ENCODE measurements at regions of chr19 and their contacts with region 1.

Region 1: GRCh38 chr19:11435058-11435832 is at the starts of genes ODAD3 and PRKCSH:
- DNase-seq: peak; percentile 99
- ATAC-seq: peak; percentile 98
- H3K4me3 ChIP-seq: peak within 1 kb of the TSS; percentile 99
- H3K27ac ChIP-seq: peak within 1 kb of the TSS; percentile 86
- H3K4me1 ChIP-seq: peaks cover 11% of the 10 kb centered on the region
- H3K27me3 ChIP-seq: no peaks in the 10 kb centered on the region
- CTCF ChIP-seq: peak; percentile 87 to 94 (median 93)
- EP300 ChIP-seq: peak in 1 of 2 experiments; percentile 44; a peak in 1 of 4 replicates
- POLR2A ChIP-seq: peak; percentile 86
- RAD21 ChIP-seq: no peak
- polyA plus RNA-seq, gene ODAD3: not detected
- polyA plus RNA-seq, gene PRKCSH: 1.1 to 5.2 TPM

Region 2: GRCh38 chr19:11293433-11294389 is 141.5 kb before region 1 on chr19:
- CTCF ChIA-PET with region 1: interaction called, 4 read pairs
- POLR2A ChIA-PET with region 1: no interaction called
- RAD21 ChIA-PET with region 1: interaction called, 3 read pairs
- SMC1A ChIA-PET with region 1: no interaction called
- in situ Hi-C with region 1: no loop called
- intact Hi-C with region 1: loop called (anchors 5 kb)
- DNase-seq: peak; percentile 59
- ATAC-seq: peak; percentile 99
- H3K4me3 ChIP-seq: peak overlapping the region; percentile 32; the same call in 1 of the 2 replicates
- H3K27ac ChIP-seq: no peak overlapping the region
- H3K4me1 ChIP-seq: peaks cover 7% of the 10 kb centered on the region
- H3K27me3 ChIP-seq: no peaks in the 10 kb centered on the region
- CTCF ChIP-seq: peak; percentile 91 to 100 (median 96)
- EP300 ChIP-seq: no peak
- POLR2A ChIP-seq: no peak
- RAD21 ChIP-seq: peak; percentile 96

Region 3: GRCh38 chr19:11374433-11375142 is 60.7 kb before region 1 on chr19 and contains the start of gene SWSAP1:
- CTCF ChIA-PET with region 1: interaction called, 9 read pairs
- POLR2A ChIA-PET with region 1: interaction called, 12 read pairs
- RAD21 ChIA-PET with region 1: interaction called, 3 read pairs
- SMC1A ChIA-PET with region 1: interaction called, 4 read pairs
- in situ Hi-C with region 1: no loop called
- intact Hi-C with region 1: no loop called
- DNase-seq: peak; percentile 99
- ATAC-seq: peak; percentile 95
- H3K4me3 ChIP-seq: peak within 1 kb of the TSS; percentile 77
- H3K27ac ChIP-seq: peak within 1 kb of the TSS; percentile 94
- H3K4me1 ChIP-seq: peaks cover 21% of the 10 kb centered on the region
- H3K27me3 ChIP-seq: no peaks in the 10 kb centered on the region
- CTCF ChIP-seq: no peak
- EP300 ChIP-seq: no peak
- POLR2A ChIP-seq: peak; percentile 95
- RAD21 ChIP-seq: no peak
- polyA plus RNA-seq, gene SWSAP1: 0.18 to 1.0 TPM

Region 4: GRCh38 chr19:11453468-11454341 is 18.5 kb after region 1 on chr19:
- CTCF ChIA-PET with region 1: interaction called, 10 read pairs
- POLR2A ChIA-PET with region 1: interaction called, 4 read pairs
- RAD21 ChIA-PET with region 1: interaction called, 6 read pairs
- SMC1A ChIA-PET with region 1: no interaction called
- in situ Hi-C with region 1: no loop called
- intact Hi-C with region 1: no loop called
- DNase-seq: no peak
- ATAC-seq: 0 out of 3 replicates have a peak, but pooled peaks have one; percentile 23
- H3K4me3 ChIP-seq: no peak overlapping the region
- H3K27ac ChIP-seq: no peak overlapping the region
- H3K4me1 ChIP-seq: 0 out of 2 replicates have a peak, but pooled peaks cover 4% of the 10 kb centered on the region
- H3K27me3 ChIP-seq: no peaks in the 10 kb centered on the region
- CTCF ChIP-seq: peak; percentile 32 to 64 (median 41)
- EP300 ChIP-seq: no peak
- POLR2A ChIP-seq: no peak
- RAD21 ChIP-seq: no peak

Region 5: DNA sequence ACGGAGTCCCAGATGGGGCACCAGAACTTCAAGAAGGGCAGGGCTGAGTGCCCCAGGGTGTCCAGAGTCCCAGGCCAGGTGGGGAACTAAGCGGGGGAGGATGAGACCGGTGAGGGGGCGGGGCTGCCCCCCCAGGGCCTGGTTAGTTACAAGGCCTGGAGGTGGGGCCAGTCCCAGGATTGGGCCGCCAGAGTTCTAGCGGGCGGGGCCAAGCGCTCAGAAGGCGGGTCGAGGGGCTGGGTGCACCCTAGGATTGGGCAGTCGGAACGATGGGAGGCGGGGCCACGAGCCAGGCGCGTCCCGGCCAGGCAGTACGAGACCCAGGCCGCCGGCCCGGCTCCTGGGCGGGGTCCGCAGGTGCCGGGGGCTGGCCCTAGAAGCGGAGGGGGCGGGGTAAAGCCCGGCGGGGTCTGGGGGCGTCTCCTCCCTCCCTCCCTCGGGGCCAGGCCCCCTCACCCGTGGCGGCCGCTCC is 69.8 kb after region 1 on chr19:
- CTCF ChIA-PET with region 1: no interaction called
- POLR2A ChIA-PET with region 1: no interaction called
- RAD21 ChIA-PET with region 1: no interaction called
- SMC1A ChIA-PET with region 1: no interaction called
- in situ Hi-C with region 1: no loop called
- intact Hi-C with region 1: loop called (anchors 1 kb)
- DNase-seq: peak; percentile 89
- ATAC-seq: peak; percentile 96
- H3K4me3 ChIP-seq: peak overlapping the region; percentile 83
- H3K27ac ChIP-seq: peak overlapping the region; percentile 70
- H3K4me1 ChIP-seq: no peaks in the 10 kb centered on the region
- H3K27me3 ChIP-seq: no peaks in the 10 kb centered on the region
- CTCF ChIP-seq: no peak
- EP300 ChIP-seq: no peak
- POLR2A ChIP-seq: no peak
- RAD21 ChIP-seq: no peak

Measured in GM12878 (cell line).